WTC11 (cell line): ENCODE measurements at regions of chr11 and their contacts with region 1.

Region 1: GRCh38 chr11:45225961-45226871 is 59.9 kb downstream of the SYT13 start:
- DNase-seq: no peak
- ATAC-seq: no peak
- H3K4me3 Mint-ChIP-seq: no peak overlapping the region
- H3K27ac Mint-ChIP-seq: no peak overlapping the region
- H3K4me1 Mint-ChIP-seq: no peaks in the 10 kb centered on the region
- H3K27me3 Mint-ChIP-seq: no peaks in the 10 kb centered on the region
- CTCF ChIP-seq: no peak

Region 2: DNA sequence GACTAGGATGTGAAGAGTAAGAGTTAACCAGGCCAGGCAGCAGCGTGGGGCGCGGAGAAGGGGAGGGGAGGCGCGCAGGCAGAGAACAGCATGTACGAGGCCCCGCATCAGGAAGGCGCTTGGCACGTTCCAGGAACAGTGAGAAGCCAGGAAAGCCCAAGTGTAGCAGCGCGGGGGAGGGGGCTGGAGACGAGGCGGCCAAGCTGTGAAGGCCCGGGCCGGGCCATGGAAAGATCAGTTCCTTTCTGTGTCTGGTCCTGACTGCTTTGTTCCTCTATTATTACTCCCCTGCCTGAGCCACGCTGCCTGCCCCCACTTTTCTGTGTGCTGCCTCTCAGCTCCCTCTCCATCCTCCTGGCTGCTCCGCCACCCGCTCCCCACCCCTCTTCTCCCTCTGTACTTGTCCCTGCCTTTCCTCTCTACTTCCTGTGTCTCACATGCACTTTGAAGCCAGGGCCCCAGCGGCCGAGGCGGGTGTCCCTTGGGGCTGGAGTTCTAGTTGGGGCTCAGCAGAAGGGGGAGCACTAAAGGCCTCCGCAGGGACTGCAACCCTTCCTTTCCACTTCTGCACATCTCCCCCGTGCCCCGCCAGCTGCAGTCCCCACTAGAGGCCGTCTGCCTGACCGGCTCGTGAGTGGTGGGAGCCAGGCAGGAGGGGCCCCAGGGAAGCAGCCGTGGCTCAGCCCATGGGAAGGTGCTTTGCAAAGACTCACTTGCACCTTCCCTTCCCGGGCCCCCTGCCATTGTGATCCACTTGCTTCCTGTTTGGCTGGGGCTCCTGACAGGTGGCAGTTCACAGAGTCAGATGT is 16.1 kb before region 1 on chr11:
- CTCF ChIA-PET with region 1: interaction called, 10 read pairs
- POLR2A ChIA-PET with region 1: no interaction called
- DNase-seq: peak; percentile 72
- ATAC-seq: peak; percentile 76
- H3K4me3 Mint-ChIP-seq: no peak overlapping the region; the same call in 1 of the 2 replicates
- H3K27ac Mint-ChIP-seq: peak overlapping the region; percentile 73; the same call in 1 of the 2 replicates
- H3K4me1 Mint-ChIP-seq: peaks cover 21% of the 10 kb centered on the region
- H3K27me3 Mint-ChIP-seq: no peaks in the 10 kb centered on the region
- CTCF ChIP-seq: no peak